PC-9 (cell line): ENCODE measurements at regions of chr4 and their contacts with region 1.

Region 1: GRCh38 chr4:122448936-122449335 is 7.6 kb downstream of the IL2 start:
- DNase-seq: no peak
- H3K4me3 ChIP-seq: no peak overlapping the region
- H3K27ac ChIP-seq: no peak overlapping the region
- H3K4me1 ChIP-seq: no peaks in the 10 kb centered on the region
- H3K27me3 ChIP-seq: no peaks in the 10 kb centered on the region
- CTCF ChIP-seq: no peak

Region 2: GRCh38 chr4:122300776-122301175 is 148.2 kb before region 1 on chr4:
- CTCF ChIA-PET with region 1: no interaction called
- POLR2A ChIA-PET with region 1: interaction called, 33 read pairs
- intact Hi-C with region 1: no loop called
- DNase-seq: no peak
- H3K4me3 ChIP-seq: no peak overlapping the region
- H3K27ac ChIP-seq: no peak overlapping the region
- H3K4me1 ChIP-seq: no peaks in the 10 kb centered on the region
- H3K27me3 ChIP-seq: no peaks in the 10 kb centered on the region
- CTCF ChIP-seq: peak; percentile 34; the same call in 1 of the 2 replicates